ENCODE measurements at regions of chr16 and their contacts with region 1.

Region 1: GRCh38 chr16:9647981-9648712 is 534.1 kb downstream of the GRIN2A start:
- DNase-seq: no peak
- ATAC-seq: peak in 3 of 4 donors; percentile 32 to 58 (median 54)
- H3K4me3 ChIP-seq: no peak overlapping the region
- H3K27ac ChIP-seq: no peak overlapping the region
- H3K4me1 ChIP-seq: no peaks in the 10 kb centered on the region
- H3K27me3 ChIP-seq: peaks cover 0 to 3% (median 0%) of the 10 kb centered on the region in 9 donors
- CTCF ChIP-seq: peak; percentile 54 to 81 (median 72)
- POLR2A ChIP-seq: no peak

Region 2: DNA sequence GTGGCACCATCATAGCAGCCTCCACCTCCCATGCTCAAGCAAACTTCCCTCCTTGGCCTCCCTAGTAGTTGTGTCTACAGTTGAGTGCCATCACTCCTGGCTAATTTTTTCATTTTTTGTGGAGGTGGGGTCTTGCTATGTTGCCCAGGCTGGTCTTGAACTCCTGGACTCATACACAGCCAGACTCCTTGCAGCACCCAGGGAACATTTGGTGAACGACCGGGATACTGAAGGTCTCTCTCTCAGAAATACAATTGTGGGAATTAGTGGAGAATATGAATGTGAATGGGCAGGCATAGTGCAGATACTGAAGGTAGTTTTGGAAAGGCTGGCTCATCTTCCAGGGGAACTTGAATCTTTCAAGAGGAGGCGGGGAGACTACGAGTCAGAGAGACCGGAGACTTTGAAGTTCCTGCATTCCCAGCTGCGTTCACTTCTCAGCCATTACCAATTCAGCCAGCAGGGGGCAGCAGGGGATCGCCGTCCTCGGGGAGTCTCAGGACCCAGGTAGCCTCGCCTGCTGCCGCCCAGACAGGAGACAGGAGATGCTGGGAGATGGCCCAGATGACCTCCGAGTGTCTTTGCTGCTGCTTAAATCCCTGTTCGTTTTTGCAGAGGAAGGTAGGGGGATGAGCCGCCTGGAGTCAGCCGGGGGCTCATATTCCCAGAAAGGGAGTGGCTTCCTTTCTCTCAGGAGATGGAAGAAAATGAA is 488.2 kb before region 1 on chr16:
- intact Hi-C with region 1: loop called in 1 of 10 experiments (anchors 10 kb)
- DNase-seq: peak in 1 of 5 donors; percentile 40
- ATAC-seq: peak in 3 of 4 donors; percentile 49 to 80 (median 65)
- H3K4me3 ChIP-seq: no peak overlapping the region
- H3K27ac ChIP-seq: no peak overlapping the region
- H3K4me1 ChIP-seq: peaks cover 0 to 4% (median 0%) of the 10 kb centered on the region in 12 donors
- H3K27me3 ChIP-seq: peaks cover 0 to 13% (median 0%) of the 10 kb centered on the region in 9 donors
- CTCF ChIP-seq: peak; percentile 37 to 78 (median 62)
- POLR2A ChIP-seq: no peak

Region 3: DNA sequence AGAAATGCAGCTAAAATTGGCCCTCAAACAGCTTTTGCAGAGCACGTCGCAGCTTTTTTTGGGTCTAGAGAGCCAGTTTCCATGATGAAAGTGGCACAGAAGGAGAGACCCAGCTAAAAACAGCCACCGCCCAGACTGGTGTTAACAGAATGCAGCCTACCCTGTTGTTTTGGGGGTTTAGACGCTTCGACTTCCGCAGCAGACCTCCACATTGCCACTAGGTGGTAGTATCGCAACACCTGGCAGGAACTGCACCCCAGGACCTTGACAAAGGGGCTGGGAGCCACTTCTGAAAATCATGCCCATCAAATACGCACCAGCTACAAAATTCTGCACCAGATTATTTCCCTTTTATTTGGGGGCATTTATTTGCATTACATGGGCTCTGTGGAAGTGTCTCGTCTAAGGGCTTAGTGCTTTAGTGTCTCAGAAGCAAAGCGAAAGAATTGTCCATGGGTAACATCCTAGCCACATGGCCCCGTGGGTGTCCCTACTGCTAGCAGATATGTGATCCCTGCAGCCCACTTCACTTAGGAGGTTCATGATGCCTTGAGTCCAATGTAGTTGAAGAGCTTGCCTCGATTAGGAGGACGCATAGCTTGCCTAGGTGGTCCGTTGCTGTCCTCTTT is 389.6 kb before region 1 on chr16:
- intact Hi-C with region 1: loop called in 1 of 10 experiments (anchors 2 kb)
- DNase-seq: peak in 4 of 5 donors; percentile 11 to 33 (median 28)
- ATAC-seq: peak in 1 of 4 donors; percentile 54
- H3K4me3 ChIP-seq: no peak overlapping the region
- H3K27ac ChIP-seq: no peak overlapping the region
- H3K4me1 ChIP-seq: peaks cover 0 to 9% (median 0%) of the 10 kb centered on the region in 12 donors
- H3K27me3 ChIP-seq: peaks cover 0 to 10% (median 0%) of the 10 kb centered on the region in 9 donors
- CTCF ChIP-seq: peak; percentile 51 to 79 (median 68)
- POLR2A ChIP-seq: no peak

Region 4: GRCh38 chr16:9297437-9298113 is 350.6 kb before region 1 on chr16:
- intact Hi-C with region 1: loop called in 2 of 10 experiments (anchors 5 kb)
- DNase-seq: peak in 4 of 5 donors; percentile 16 to 61 (median 32)
- ATAC-seq: no peak
- H3K4me3 ChIP-seq: no peak overlapping the region
- H3K27ac ChIP-seq: no peak overlapping the region
- H3K4me1 ChIP-seq: no peaks in the 10 kb centered on the region
- H3K27me3 ChIP-seq: peaks cover 0 to 4% (median 0%) of the 10 kb centered on the region in 9 donors
- CTCF ChIP-seq: peak; percentile 35 to 63 (median 50)
- POLR2A ChIP-seq: no peak

Region 5: DNA sequence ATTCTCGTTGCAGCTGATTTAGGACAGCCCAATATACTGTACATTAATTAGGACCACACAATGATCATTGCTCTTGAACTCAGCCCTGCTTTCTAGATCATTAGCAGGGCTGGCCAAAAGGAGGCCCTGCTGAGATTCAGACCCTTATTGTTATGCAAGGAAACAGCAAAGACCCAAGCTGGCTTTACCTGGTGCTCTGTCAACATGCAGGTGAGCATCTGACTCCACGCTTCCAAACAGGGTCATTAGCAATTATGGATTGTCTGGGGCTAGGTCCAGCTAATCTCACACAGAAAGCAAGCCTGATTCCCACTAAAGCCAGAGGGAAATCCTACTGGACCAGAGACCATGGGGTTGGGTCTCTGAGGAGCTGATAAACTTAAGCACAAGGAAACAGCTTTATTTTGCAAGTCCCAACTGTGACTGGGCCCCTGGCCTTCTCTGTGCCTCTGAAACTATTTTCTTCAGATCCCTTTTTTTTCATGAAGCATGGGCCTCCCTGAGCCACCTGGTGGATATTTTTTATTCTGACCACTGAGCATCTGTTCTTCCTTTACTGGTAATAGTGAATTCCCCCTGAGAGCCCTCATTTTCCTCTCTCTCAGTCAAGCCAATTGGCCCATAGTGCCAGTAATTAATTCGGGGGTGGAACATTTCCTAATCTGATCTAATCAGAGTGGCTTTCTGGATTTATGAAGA is 298.0 kb after region 1 on chr16:
- intact Hi-C with region 1: loop called in 1 of 10 experiments (anchors 10 kb)
- DNase-seq: no peak
- ATAC-seq: no peak
- H3K4me3 ChIP-seq: no peak overlapping the region
- H3K27ac ChIP-seq: no peak overlapping the region
- H3K4me1 ChIP-seq: peaks cover 0 to 12% (median 0%) of the 10 kb centered on the region in 12 donors
- H3K27me3 ChIP-seq: peaks cover 0 to 6% (median 0%) of the 10 kb centered on the region in 9 donors
- CTCF ChIP-seq: peak in 6 of 12 donors; percentile 7 to 38 (median 26)
- POLR2A ChIP-seq: no peak

Region 6: GRCh38 chr16:10039220-10040096 is 391.3 kb after region 1 on chr16:
- intact Hi-C with region 1: loop called in 3 of 10 experiments (anchors 10 kb)
- DNase-seq: peak in 3 of 5 donors; percentile 10 to 44 (median 37)
- ATAC-seq: peak in 3 of 4 donors; percentile 54 to 79 (median 69)
- H3K4me3 ChIP-seq: peak overlapping the region in 9 of 12 donors; percentile 6 to 40 (median 23)
- H3K27ac ChIP-seq: no peak overlapping the region
- H3K4me1 ChIP-seq: peaks cover 0 to 8% (median 0%) of the 10 kb centered on the region in 12 donors
- H3K27me3 ChIP-seq: peaks cover 0 to 29% (median 0%) of the 10 kb centered on the region in 9 donors
- CTCF ChIP-seq: peak in 10 of 12 donors; percentile 7 to 51 (median 30)
- POLR2A ChIP-seq: no peak